ENCODE measurements at regions of chr7 and their contacts with region 1.

Region 1: GRCh38 chr7:143263266-143264195 is at the start of gene GSTK1:
- DNase-seq: peak; percentile 95
- ATAC-seq: peak; percentile 98
- total RNA-seq, gene GSTK1: 278 TPM

Region 2: GRCh38 chr7:143287935-143288826 is 24.6 kb after region 1 on chr7 and contains the start of gene CASP2:
- intact Hi-C with region 1: loop called (anchors 1 kb)
- DNase-seq: peak; percentile 100
- ATAC-seq: peak; percentile 97
- total RNA-seq, gene CASP2: 11.8 TPM

Region 3: GRCh38 chr7:143380255-143380645 is 116.7 kb after region 1 on chr7:
- intact Hi-C with region 1: loop called (anchors 1 kb)
- DNase-seq: peak; percentile 93
- ATAC-seq: peak; percentile 82